CD4-positive, alpha-beta T cell (primary cell): ENCODE measurements at regions of chr2 and their contacts with region 1.

Region 1: DNA sequence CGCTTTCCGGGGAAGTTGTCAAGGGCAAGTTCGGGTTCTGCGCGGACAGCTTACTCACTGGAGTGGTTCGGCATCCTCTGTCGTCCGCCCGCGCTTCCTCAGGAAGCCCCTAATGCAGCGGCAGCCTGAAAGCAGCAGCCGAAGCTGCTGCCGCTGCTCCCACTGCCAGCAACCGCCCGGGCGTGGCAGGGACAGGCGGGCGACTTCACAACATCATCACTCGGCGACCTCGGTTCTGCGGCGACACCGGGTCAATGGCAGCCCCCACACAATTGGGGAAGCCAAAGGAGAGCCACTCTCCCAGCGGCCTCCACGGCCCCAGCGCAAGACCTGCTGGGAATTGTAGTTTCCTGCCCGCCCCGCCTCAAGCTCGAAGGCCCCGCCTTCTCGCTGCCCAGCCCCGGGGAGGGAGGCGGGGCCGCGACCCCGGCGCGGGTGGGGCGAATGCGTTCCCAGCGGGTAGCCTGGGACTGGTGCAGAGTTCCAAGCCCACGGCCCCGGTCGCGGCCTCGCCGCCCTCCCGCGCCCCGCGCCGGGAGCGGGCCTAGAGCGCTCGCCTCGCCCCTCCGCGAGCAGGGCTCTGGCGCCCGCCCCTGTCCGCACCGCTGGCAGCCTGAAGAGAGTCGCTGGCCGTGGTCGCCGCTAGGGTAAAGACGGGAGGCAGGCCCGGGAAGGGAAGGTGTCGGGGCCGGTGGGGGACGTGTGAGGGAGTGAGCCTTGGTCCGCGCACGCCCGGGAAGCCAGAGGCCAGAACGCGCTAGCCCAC is at the starts of genes STRADB and TRAK2:
- DNase-seq: peak; percentile 87 to 98 (median 92)
- ATAC-seq: peak; percentile 84
- H3K4me3 ChIP-seq: peak within 1 kb of the TSS; percentile 90
- H3K4me3 Mint-ChIP-seq: peak within 1 kb of the TSS; percentile 97
- H3K27ac ChIP-seq: peak within 1 kb of the TSS; percentile 83 to 85
- H3K27ac Mint-ChIP-seq: peak within 1 kb of the TSS; percentile 98
- H3K4me1 ChIP-seq: peaks cover 44% of the 10 kb centered on the region
- H3K4me1 Mint-ChIP-seq: peaks cover 61% of the 10 kb centered on the region
- H3K27me3 ChIP-seq: no peaks in the 10 kb centered on the region
- H3K27me3 Mint-ChIP-seq: no peaks in the 10 kb centered on the region
- CTCF ChIP-seq: no peak
- total RNA-seq, gene STRADB: 4.2 to 5.6 TPM
- total RNA-seq, gene TRAK2: 32.5 to 35.6 TPM

Region 2: GRCh38 chr2:200525882-200526651 is 925.4 kb before region 1 on chr2 and contains the start of gene SGO2:
- CTCF ChIA-PET with region 1: no interaction called
- POLR2A ChIA-PET with region 1: no interaction called
- intact Hi-C with region 1: loop called in 1 of 2 experiments (anchors 5 kb)
- DNase-seq: peak; percentile 90 to 98 (median 94)
- ATAC-seq: peak; percentile 99
- H3K4me3 ChIP-seq: peak within 1 kb of the TSS; percentile 71
- H3K4me3 Mint-ChIP-seq: peak within 1 kb of the TSS; percentile 96
- H3K27ac ChIP-seq: peak within 1 kb of the TSS in 1 of 2 donors; percentile 0
- H3K27ac Mint-ChIP-seq: peak within 1 kb of the TSS; percentile 83
- H3K4me1 ChIP-seq: peaks cover 9% of the 10 kb centered on the region
- H3K4me1 Mint-ChIP-seq: peaks cover 13% of the 10 kb centered on the region
- H3K27me3 ChIP-seq: no peaks in the 10 kb centered on the region
- H3K27me3 Mint-ChIP-seq: no peaks in the 10 kb centered on the region
- CTCF ChIP-seq: no peak
- total RNA-seq, gene SGO2: 0.64 to 0.74 TPM

Region 3: GRCh38 chr2:201118121-201118960 is 333.1 kb before region 1 on chr2:
- CTCF ChIA-PET with region 1: interaction called, 4 read pairs
- POLR2A ChIA-PET with region 1: interaction called, 14 read pairs
- intact Hi-C with region 1: no loop called
- DNase-seq: peak; percentile 80 to 93 (median 86)
- ATAC-seq: peak; percentile 46
- H3K4me3 ChIP-seq: peak overlapping the region; percentile 84
- H3K4me3 Mint-ChIP-seq: peak overlapping the region; percentile 88
- H3K27ac ChIP-seq: peak overlapping the region; percentile 78 to 98
- H3K27ac Mint-ChIP-seq: peak overlapping the region; percentile 93
- H3K4me1 ChIP-seq: peaks cover 40% of the 10 kb centered on the region
- H3K4me1 Mint-ChIP-seq: peaks cover 67% of the 10 kb centered on the region
- H3K27me3 ChIP-seq: no peaks in the 10 kb centered on the region
- H3K27me3 Mint-ChIP-seq: no peaks in the 10 kb centered on the region
- CTCF ChIP-seq: peak; percentile 67

Region 4: GRCh38 chr2:201414099-201415023 is 37.1 kb before region 1 on chr2:
- CTCF ChIA-PET with region 1: no interaction called
- POLR2A ChIA-PET with region 1: interaction called, 37 read pairs
- intact Hi-C with region 1: loop called in 1 of 2 experiments (anchors 5 kb)
- DNase-seq: peak in 3 of 14 experiments; percentile 21 to 78 (median 23)
- ATAC-seq: peak; percentile 81
- H3K4me3 ChIP-seq: peak overlapping the region; percentile 8
- H3K4me3 Mint-ChIP-seq: no peak overlapping the region
- H3K27ac ChIP-seq: peak overlapping the region in 1 of 2 donors; percentile 26
- H3K27ac Mint-ChIP-seq: no peak overlapping the region
- H3K4me1 ChIP-seq: peaks cover 15% of the 10 kb centered on the region
- H3K4me1 Mint-ChIP-seq: peaks cover 12% of the 10 kb centered on the region
- H3K27me3 ChIP-seq: no peaks in the 10 kb centered on the region
- H3K27me3 Mint-ChIP-seq: no peaks in the 10 kb centered on the region
- CTCF ChIP-seq: no peak

Region 5: GRCh38 chr2:201642579-201643215 is 191.2 kb after region 1 on chr2:
- CTCF ChIA-PET with region 1: no interaction called
- POLR2A ChIA-PET with region 1: interaction called, 29 read pairs
- intact Hi-C with region 1: loop called (anchors 2 to 5 kb)
- DNase-seq: peak; percentile 68 to 92 (median 80)
- ATAC-seq: peak; percentile 88
- H3K4me3 ChIP-seq: peak overlapping the region; percentile 95
- H3K4me3 Mint-ChIP-seq: peak overlapping the region; percentile 96
- H3K27ac ChIP-seq: peak overlapping the region; percentile 79 to 89
- H3K27ac Mint-ChIP-seq: peak overlapping the region; percentile 96
- H3K4me1 ChIP-seq: peaks cover 9% of the 10 kb centered on the region
- H3K4me1 Mint-ChIP-seq: peaks cover 10% of the 10 kb centered on the region
- H3K27me3 ChIP-seq: no peaks in the 10 kb centered on the region
- H3K27me3 Mint-ChIP-seq: no peaks in the 10 kb centered on the region
- CTCF ChIP-seq: peak; percentile 11

Region 6: DNA sequence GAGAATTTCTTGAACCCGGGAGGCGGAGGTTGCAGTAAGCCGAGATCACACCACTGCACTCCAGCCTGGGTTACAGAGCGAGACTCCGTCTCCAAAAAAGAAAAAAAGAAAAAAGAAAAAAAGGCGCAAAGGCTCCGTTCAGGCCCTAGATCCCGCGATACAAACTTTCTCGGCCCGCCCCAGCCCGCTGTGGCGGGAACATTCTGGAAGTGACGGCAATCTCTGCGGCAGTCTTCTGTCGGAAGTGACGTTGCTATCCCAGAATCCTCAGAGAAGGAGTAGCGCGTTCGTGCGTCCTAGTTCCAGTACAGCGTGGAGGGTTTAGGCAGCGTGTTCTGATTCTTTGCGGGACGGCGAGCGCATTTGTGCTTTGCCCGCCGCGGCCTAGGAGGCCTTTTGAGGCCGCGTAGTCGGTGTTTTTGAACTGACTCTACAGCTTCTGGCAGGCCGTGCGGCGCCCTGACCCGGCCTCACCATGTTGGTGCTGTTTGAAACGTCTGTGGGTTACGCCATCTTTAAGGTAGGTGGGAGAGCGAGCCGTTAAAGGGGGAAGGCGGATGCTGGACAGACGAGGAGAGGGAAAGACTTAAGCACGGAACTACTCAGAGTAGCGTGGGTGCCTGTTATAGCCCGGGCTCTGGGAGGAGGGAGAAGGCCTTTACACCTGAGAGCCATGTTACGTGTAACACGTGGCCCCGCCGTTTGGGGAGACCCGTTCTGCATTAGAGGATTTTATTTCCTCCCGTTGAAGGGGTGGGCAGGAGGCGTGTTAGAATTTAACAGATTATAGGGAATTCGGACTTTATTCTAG is 814.2 kb after region 1 on chr2 and contains the start of gene NOP58:
- CTCF ChIA-PET with region 1: no interaction called
- POLR2A ChIA-PET with region 1: no interaction called
- intact Hi-C with region 1: loop called in 1 of 2 experiments (anchors 10 kb)
- DNase-seq: peak; percentile 75 to 97 (median 84)
- ATAC-seq: peak; percentile 80
- H3K4me3 ChIP-seq: peak within 1 kb of the TSS; percentile 97
- H3K4me3 Mint-ChIP-seq: peak within 1 kb of the TSS; percentile 80
- H3K27ac ChIP-seq: peak within 1 kb of the TSS; percentile 97 to 99
- H3K27ac Mint-ChIP-seq: no peak within 1 kb of the TSS
- H3K4me1 ChIP-seq: peaks cover 29% of the 10 kb centered on the region
- H3K4me1 Mint-ChIP-seq: peaks cover 21% of the 10 kb centered on the region
- H3K27me3 ChIP-seq: no peaks in the 10 kb centered on the region
- H3K27me3 Mint-ChIP-seq: no peaks in the 10 kb centered on the region
- CTCF ChIP-seq: no peak
- total RNA-seq, gene NOP58: 280 to 288 TPM